ENCODE measurements at regions of chr14 and their contacts with region 1.

Region 1: GRCh38 chr14:92783816-92784431 is 10.2 kb upstream of the GOLGA5 start:
- DNase-seq: peak; percentile 71
- H3K4me3 ChIP-seq: no peak overlapping the region
- H3K27ac ChIP-seq: peak overlapping the region; percentile 46 to 74
- H3K4me1 ChIP-seq: peaks cover 19% of the 10 kb centered on the region
- H3K27me3 ChIP-seq: no peaks in the 10 kb centered on the region
- CTCF ChIP-seq: peak; percentile 46 to 62 (median 54)
- POLR2A ChIP-seq: no peak

Region 2: GRCh38 chr14:92686900-92687444 is 97.0 kb before region 1 on chr14:
- intact Hi-C with region 1: loop called (anchors 10 kb)
- DNase-seq: peak; percentile 83
- H3K4me3 ChIP-seq: peak overlapping the region; percentile 34 to 42
- H3K27ac ChIP-seq: no peak overlapping the region
- H3K4me1 ChIP-seq: peaks cover 6% of the 10 kb centered on the region
- H3K27me3 ChIP-seq: no peaks in the 10 kb centered on the region
- CTCF ChIP-seq: peak; percentile 86 to 95 (median 93)
- POLR2A ChIP-seq: no peak

Measured in testis (tissue), 5 donors.